ENCODE measurements at regions of chr5 and their contacts with region 1.

Region 1: DNA sequence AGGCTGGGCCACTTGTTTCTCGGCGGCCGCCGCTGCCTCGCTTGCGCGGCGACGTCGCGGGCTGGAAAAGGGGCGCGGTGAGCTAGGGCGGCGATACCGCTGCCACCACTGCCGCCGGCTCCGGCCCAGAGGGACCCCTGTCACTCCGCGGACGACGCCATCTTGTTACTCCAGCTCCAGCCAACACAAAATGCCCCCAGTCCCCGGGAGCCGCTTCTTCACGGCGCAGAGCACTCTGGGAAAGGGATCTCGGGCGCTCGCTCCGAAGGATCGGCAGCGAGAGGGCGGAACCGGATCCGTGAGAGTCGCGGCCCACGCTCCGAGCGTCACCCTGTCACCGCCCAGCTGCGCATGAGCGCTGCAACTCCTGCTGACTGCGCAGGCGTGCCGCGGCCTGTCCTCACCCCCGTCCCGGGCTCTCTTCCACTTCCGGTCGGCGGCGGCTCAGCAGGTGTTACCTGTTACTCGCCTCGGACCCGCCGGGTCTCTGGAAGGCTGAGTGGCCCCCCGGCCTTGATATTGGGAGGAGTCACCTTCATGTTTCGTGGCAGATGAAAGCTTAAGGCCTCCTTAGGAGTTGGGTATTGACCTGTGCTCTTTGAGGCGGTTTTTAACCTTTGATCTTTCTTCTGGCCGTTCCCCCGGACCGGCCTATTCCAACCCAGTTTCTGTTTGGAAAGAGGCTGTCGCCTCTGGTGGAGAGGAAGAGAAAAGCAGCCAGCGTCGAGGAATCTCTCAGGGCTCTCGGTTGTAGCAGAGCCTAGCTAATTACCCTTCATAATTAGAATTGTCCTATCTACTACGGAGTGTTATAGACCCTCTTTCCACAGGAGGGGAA is at the start of gene CSNK1A1:
- DNase-seq: peak; percentile 100
- H3K4me3 Mint-ChIP-seq: peak within 1 kb of the TSS; percentile 89
- H3K27ac Mint-ChIP-seq: peak within 1 kb of the TSS; percentile 99
- H3K4me1 Mint-ChIP-seq: peaks cover 10% of the 10 kb centered on the region
- H3K27me3 Mint-ChIP-seq: no peaks in the 10 kb centered on the region
- CTCF ChIP-seq: peak; percentile 97
- total RNA-seq, gene CSNK1A1: 666 and 744 TPM in 2 replicates

Region 2: DNA sequence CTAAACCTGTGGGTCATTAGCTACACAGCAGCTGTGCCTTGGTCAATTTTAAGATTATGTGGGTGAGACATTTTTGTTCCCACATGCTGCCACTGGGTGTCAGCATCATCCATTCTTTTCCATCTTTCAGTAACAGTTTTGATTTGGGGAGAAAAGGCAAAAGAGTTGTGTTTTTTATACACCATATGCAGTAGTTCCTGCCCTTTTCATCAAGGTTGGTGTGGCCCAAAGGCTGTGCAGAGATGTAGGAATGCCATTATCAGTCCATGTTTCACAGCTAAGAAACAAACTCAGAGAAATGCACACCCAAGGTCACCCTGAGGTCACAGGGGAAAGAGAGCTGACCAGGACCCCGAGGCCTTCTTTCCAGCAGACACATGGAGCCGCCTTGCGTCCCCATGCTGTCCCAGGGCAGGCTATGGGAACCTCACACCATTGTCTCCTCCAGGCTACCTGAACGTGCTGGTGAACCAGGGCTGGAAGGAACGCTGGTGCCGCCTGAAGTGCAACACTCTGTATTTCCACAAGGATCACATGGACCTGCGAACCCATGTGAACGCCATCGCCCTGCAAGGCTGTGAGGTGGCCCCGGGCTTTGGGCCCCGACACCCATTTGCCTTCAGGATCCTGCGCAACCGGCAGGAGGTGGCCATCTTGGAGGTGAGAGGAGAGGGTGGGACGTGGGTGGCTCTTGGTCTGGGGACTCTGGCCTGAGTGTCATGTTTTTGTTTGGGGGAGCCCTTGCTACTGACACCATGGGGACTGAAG is 234.0 kb before region 1 on chr5:
- CTCF ChIA-PET with region 1: interaction called, 4 read pairs
- POLR2A ChIA-PET with region 1: interaction called, 24 read pairs
- intact Hi-C with region 1: no loop called
- DNase-seq: peak; percentile 71
- H3K4me3 Mint-ChIP-seq: no peak overlapping the region
- H3K27ac Mint-ChIP-seq: no peak overlapping the region
- H3K4me1 Mint-ChIP-seq: peaks cover 12% of the 10 kb centered on the region
- H3K27me3 Mint-ChIP-seq: no peaks in the 10 kb centered on the region
- CTCF ChIP-seq: peak; percentile 78

Region 3: GRCh38 chr5:149404746-149405549 is 146.5 kb before region 1 on chr5:
- CTCF ChIA-PET with region 1: no interaction called
- POLR2A ChIA-PET with region 1: no interaction called
- intact Hi-C with region 1: no loop called
- DNase-seq: no peak
- H3K4me3 Mint-ChIP-seq: no peak overlapping the region
- H3K27ac Mint-ChIP-seq: no peak overlapping the region
- H3K4me1 Mint-ChIP-seq: no peaks in the 10 kb centered on the region
- H3K27me3 Mint-ChIP-seq: peaks cover 11% of the 10 kb centered on the region
- CTCF ChIP-seq: no peak

Region 4: GRCh38 chr5:149434162-149435014 is 117.0 kb before region 1 on chr5:
- CTCF ChIA-PET with region 1: interaction called, 202 read pairs
- POLR2A ChIA-PET with region 1: interaction called, 192 read pairs
- intact Hi-C with region 1: no loop called
- DNase-seq: peak; percentile 75
- H3K4me3 Mint-ChIP-seq: no peak overlapping the region
- H3K27ac Mint-ChIP-seq: no peak overlapping the region
- H3K4me1 Mint-ChIP-seq: peaks cover 13% of the 10 kb centered on the region
- H3K27me3 Mint-ChIP-seq: no peaks in the 10 kb centered on the region
- CTCF ChIP-seq: peak; percentile 98

Region 5: GRCh38 chr5:149485655-149486425 is 65.6 kb before region 1 on chr5:
- CTCF ChIA-PET with region 1: interaction called, 3 read pairs
- POLR2A ChIA-PET with region 1: interaction called, 115 read pairs
- intact Hi-C with region 1: loop called (anchors 2 kb)
- DNase-seq: peak; percentile 97
- H3K4me3 Mint-ChIP-seq: no peak overlapping the region
- H3K27ac Mint-ChIP-seq: peak overlapping the region; percentile 98
- H3K4me1 Mint-ChIP-seq: peaks cover 57% of the 10 kb centered on the region
- H3K27me3 Mint-ChIP-seq: no peaks in the 10 kb centered on the region
- CTCF ChIP-seq: no peak

Region 6: GRCh38 chr5:149537374-149537975 is 13.9 kb before region 1 on chr5:
- CTCF ChIA-PET with region 1: interaction called, 8 read pairs
- POLR2A ChIA-PET with region 1: interaction called, 60 read pairs
- intact Hi-C with region 1: no loop called
- DNase-seq: no peak
- H3K4me3 Mint-ChIP-seq: no peak overlapping the region
- H3K27ac Mint-ChIP-seq: peak overlapping the region; percentile 5
- H3K4me1 Mint-ChIP-seq: peaks cover 41% of the 10 kb centered on the region
- H3K27me3 Mint-ChIP-seq: no peaks in the 10 kb centered on the region
- CTCF ChIP-seq: no peak

Region 7: GRCh38 chr5:149611326-149611725 is 59.9 kb after region 1 on chr5:
- CTCF ChIA-PET with region 1: interaction called, 15 read pairs
- POLR2A ChIA-PET with region 1: interaction called, 56 read pairs
- intact Hi-C with region 1: no loop called
- DNase-seq: no peak
- H3K4me3 Mint-ChIP-seq: no peak overlapping the region
- H3K27ac Mint-ChIP-seq: no peak overlapping the region
- H3K4me1 Mint-ChIP-seq: peaks cover 26% of the 10 kb centered on the region
- H3K27me3 Mint-ChIP-seq: no peaks in the 10 kb centered on the region
- CTCF ChIP-seq: no peak

Measured in MCF 10A (cell line).